A549 (cell line): ENCODE measurements at regions of chr14 and their contacts with region 1.

Region 1: DNA sequence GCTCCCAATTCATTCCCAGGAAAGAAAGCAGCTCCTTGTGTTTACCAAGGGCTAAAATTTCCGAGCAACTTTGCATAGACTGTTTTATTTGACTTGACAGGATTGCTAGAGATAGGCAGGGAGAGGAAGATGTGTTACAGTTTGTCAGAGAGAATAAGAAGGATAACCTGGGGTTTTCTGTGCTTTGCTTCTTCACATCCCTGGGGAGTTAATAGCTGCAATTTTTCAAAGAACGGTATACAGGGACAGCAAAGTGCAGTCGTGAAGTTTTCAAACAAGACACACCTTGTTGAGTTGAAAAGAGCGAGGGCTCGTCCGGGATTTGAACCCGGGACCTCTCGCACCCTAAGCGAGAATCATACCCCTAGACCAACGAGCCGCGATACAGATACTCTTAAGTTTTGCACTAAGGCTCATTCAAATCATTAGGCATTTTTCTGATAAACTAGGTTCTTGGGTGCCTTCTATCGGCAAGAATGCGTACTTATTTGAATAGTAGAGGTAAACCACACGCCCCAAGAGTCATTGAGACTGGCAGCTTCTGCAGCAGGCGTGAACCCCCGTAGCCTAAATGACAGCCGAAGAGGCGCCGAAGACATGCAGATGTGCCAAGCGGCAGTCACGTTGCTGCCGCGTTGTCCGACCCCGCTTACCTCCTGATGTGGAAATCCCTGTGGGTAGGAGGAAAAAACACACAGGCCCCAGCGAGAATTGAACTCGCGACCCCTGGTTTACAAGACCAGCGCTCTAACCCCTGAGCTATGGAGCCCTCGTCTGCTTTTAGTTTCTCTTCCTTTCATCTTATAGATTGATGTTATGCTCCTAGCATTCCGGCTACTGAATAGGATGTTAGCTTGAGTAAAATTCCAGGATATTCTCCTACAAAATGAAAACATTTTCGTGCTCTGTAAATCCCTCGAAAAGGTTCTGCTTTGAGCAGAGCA is 22.2 kb upstream of the RNASE12 start:
- DNase-seq: peak; percentile 87 to 99
- ATAC-seq: peak; percentile 82 to 88
- H3K4me3 ChIP-seq: peak overlapping the region; percentile 50
- H3K27ac ChIP-seq: peak overlapping the region; percentile 78 to 81
- H3K4me1 ChIP-seq: peaks cover 39% of the 10 kb centered on the region
- CTCF ChIP-seq: peak; percentile 66
- EP300 ChIP-seq: no peak
- POLR2A ChIP-seq: no peak
- RAD21 ChIP-seq: 0 out of 5 replicates have a peak, but pooled peaks have one; percentile 1 to 21

Region 2: DNA sequence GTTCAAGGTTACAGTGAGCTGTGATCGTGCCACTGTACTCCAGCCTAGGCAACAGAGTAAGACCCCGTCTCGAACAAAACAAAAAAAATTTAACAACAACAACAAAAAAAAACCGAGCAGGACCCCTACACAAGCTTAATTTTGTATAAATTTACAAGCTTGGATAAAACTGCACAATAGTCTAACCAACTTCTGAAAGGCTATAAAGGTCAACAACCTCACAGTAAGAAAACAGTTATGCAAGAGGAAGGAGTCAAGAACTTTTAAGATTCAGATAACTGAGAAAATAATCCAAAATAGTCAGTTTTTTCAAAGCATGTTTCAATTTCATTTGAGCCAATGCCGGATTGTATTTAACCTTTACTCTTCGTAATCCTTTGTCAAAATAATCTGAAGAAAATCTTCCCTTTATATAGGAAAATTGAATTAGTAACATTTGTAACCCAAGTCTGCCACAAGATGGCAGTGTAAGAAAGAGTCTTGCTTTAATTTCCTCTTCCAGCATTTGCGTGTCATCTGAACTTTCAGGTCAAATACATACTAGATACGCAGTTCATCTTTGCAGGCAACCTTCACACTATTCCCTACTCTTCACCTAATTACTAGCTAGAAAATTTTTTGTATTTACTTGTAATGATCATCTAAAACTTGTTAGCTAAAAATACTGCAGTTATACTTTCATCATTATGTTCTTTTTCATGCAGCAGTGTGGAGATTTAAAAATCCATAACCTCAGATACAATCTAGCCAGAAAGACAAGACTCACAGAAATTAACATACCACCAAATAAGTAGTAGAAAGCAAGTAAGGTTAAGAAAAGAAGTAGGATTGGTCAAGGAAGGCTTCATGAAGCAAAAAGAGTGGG is 286.1 kb before region 1 on chr14:
- CTCF ChIA-PET with region 1: interaction called, 67 read pairs
- POLR2A ChIA-PET with region 1: no interaction called
- DNase-seq: peak; percentile 55 to 74
- ATAC-seq: peak in 1 of 2 experiments; percentile 61; a peak in 3 of 6 replicates
- H3K4me3 ChIP-seq: no peak overlapping the region
- H3K27ac ChIP-seq: no peak overlapping the region
- H3K4me1 ChIP-seq: peaks cover 35% of the 10 kb centered on the region
- CTCF ChIP-seq: peak; percentile 86
- EP300 ChIP-seq: no peak
- POLR2A ChIP-seq: no peak
- RAD21 ChIP-seq: peak; percentile 66 to 73

Region 3: DNA sequence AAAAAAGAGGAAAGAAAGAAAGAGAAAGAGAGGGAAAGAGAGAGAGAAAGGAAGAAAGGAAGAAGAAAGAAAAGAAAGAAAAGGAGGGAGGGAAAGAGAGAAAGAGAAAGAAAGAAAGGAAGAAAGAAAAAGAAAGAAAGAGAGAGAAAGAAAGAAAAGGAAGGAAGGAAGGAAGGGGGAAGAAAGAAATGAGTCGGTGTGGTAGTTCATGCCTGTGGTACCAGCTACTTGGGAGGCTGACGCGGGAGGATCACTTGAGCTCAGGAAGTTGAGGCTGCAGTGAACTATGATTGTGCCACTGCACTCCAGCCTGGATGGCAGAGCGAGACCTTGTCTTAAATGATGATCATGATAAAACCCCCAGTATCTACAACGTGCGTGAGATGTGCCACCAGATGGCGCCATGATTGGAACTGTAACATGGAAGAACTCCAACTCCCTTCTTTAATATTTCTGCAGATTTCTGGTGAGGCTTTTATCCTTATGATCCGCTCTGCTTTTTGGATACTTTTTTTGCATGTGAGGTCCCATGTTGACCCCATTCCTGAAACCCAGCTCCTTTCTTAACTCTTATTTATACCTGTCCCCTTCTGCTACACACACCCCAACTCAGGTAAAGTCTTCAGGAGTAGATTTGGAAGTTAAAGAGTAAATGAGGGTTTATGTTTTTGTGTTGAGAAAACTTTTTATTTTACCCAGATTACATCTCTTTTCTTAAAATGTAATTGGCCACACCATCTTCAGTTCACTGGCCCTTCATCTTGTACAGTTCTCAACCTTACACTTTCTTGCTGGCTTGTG is 82.4 kb before region 1 on chr14:
- CTCF ChIA-PET with region 1: interaction called, 11 read pairs
- POLR2A ChIA-PET with region 1: no interaction called
- DNase-seq: peak; percentile 46 to 84
- ATAC-seq: peak; percentile 92 to 98
- H3K4me3 ChIP-seq: peak overlapping the region; percentile 18; the same call in 1 of the 3 replicates
- H3K27ac ChIP-seq: no peak overlapping the region
- H3K4me1 ChIP-seq: no peaks in the 10 kb centered on the region
- CTCF ChIP-seq: peak; percentile 83
- EP300 ChIP-seq: no peak
- POLR2A ChIP-seq: no peak
- RAD21 ChIP-seq: peak; percentile 59 to 65

Region 4: GRCh38 chr14:20624495-20625070 is 11.2 kb after region 1 on chr14:
- CTCF ChIA-PET with region 1: interaction called, 30 read pairs
- POLR2A ChIA-PET with region 1: interaction called, 5 read pairs
- DNase-seq: peak; percentile 75 to 93
- ATAC-seq: peak; percentile 79 to 87
- H3K4me3 ChIP-seq: peak overlapping the region; percentile 53
- H3K27ac ChIP-seq: peak overlapping the region; percentile 58 to 79
- H3K4me1 ChIP-seq: peaks cover 32% of the 10 kb centered on the region; the same call in 2 of the 3 replicates
- CTCF ChIP-seq: no peak
- EP300 ChIP-seq: no peak
- POLR2A ChIP-seq: no peak
- RAD21 ChIP-seq: no peak

Region 5: GRCh38 chr14:20652996-20653975 is 39.9 kb after region 1 on chr14:
- CTCF ChIA-PET with region 1: interaction called, 14 read pairs
- POLR2A ChIA-PET with region 1: no interaction called
- DNase-seq: peak; percentile 64 to 97
- ATAC-seq: peak; percentile 75 to 83
- H3K4me3 ChIP-seq: peak overlapping the region; percentile 75
- H3K27ac ChIP-seq: peak overlapping the region; percentile 25 to 65; a peak in 3 of 6 replicates
- H3K4me1 ChIP-seq: peaks cover 26% of the 10 kb centered on the region; the same call in 2 of the 3 replicates
- CTCF ChIP-seq: no peak
- EP300 ChIP-seq: no peak
- POLR2A ChIP-seq: no peak
- RAD21 ChIP-seq: no peak; a peak in 1 of 5 replicates

Region 6: GRCh38 chr14:20690848-20691523 is 77.6 kb after region 1 on chr14:
- CTCF ChIA-PET with region 1: interaction called, 31 read pairs
- POLR2A ChIA-PET with region 1: interaction called, 9 read pairs
- DNase-seq: peak; percentile 71 to 81
- ATAC-seq: peak; percentile 82 to 84
- H3K4me3 ChIP-seq: peak overlapping the region; percentile 5; the same call in 1 of the 3 replicates
- H3K27ac ChIP-seq: peak overlapping the region; percentile 2 to 26; a peak in 1 of 6 replicates
- H3K4me1 ChIP-seq: peaks cover 34% of the 10 kb centered on the region
- CTCF ChIP-seq: peak; percentile 88
- EP300 ChIP-seq: no peak
- POLR2A ChIP-seq: no peak
- RAD21 ChIP-seq: peak; percentile 88 to 92

Region 7: DNA sequence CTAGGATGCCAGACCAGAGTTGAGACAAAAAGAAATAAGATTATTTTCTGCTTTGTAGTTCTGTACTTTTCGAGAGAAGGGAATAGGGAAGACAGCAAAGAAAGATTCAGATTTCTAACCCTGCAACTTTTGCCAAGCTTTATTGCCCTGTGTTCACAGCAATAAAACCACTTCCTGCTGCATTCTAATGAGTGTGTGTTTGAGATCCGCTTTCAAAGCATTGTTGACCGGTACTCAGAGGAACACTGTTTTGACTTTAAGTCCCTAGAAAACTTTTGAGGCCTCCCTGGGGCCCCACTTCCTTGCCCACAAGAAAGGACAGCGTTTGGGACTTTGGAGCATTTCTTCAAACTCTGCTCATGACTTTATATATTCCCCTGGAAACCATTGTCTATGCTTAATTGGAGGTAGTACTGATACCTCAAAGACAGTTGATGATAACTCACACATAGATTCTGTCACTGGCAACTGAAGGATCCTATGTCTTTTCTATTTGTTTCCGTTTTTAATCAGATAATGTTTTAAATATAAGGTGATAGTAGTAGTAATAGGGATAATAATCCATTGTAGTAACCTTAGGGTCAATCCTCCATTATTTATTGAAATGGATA is 169.0 kb after region 1 on chr14:
- CTCF ChIA-PET with region 1: no interaction called
- POLR2A ChIA-PET with region 1: no interaction called
- DNase-seq: no peak
- ATAC-seq: no peak
- H3K4me3 ChIP-seq: no peak overlapping the region
- H3K27ac ChIP-seq: no peak overlapping the region
- H3K4me1 ChIP-seq: no peaks in the 10 kb centered on the region
- CTCF ChIP-seq: no peak
- EP300 ChIP-seq: no peak
- POLR2A ChIP-seq: no peak
- RAD21 ChIP-seq: no peak

Region 8: GRCh38 chr14:21084988-21085853 is 471.9 kb after region 1 on chr14:
- CTCF ChIA-PET with region 1: no interaction called
- POLR2A ChIA-PET with region 1: no interaction called
- DNase-seq: no peak
- ATAC-seq: peak in 1 of 2 experiments; percentile 8; a peak in 2 of 6 replicates
- H3K4me3 ChIP-seq: no peak overlapping the region
- H3K27ac ChIP-seq: no peak overlapping the region
- H3K4me1 ChIP-seq: peaks cover 20% of the 10 kb centered on the region; the same call in 1 of the 3 replicates
- CTCF ChIP-seq: no peak
- EP300 ChIP-seq: no peak
- POLR2A ChIP-seq: no peak
- RAD21 ChIP-seq: no peak